ENCODE measurements at regions of chr6 and their contacts with region 1.

Region 1: GRCh38 chr6:157034436-157035230 is 257.5 kb downstream of the ARID1B start:
- DNase-seq: no peak
- H3K4me3 ChIP-seq: peak overlapping the region in 1 of 8 donors; percentile 36
- H3K27ac ChIP-seq: peak overlapping the region in 3 of 8 donors; percentile 76 to 79 (median 77)
- H3K4me1 ChIP-seq: peaks cover 9 to 62% (median 33%) of the 10 kb centered on the region in 6 donors
- H3K27me3 ChIP-seq: no peaks in the 10 kb centered on the region
- CTCF ChIP-seq: peak in 10 of 11 experiments; percentile 16 to 69 (median 60)
- POLR2A ChIP-seq: no peak

Region 2: DNA sequence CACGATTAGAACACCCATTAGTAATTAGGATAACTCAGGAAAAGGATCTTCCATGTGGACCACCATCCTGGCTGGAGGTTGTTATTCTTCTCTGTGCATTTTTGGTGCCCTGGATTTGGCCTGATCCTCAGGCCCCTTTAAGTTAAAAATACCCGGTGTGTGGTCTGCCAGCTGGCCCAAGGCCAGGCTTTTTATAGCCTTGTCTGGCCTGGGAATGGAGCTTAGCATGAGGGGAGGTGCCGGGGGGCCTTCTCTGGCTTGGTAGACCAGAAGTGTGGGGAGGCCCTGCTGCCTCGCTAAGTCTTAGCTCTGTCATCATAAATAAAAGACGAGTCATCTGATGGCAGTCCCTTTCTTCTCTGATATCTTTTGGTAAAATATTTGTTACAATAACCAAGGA is 186.1 kb before region 1 on chr6:
- intact Hi-C with region 1: no loop called
- DNase-seq: no peak
- H3K4me3 ChIP-seq: no peak overlapping the region
- H3K27ac ChIP-seq: peak overlapping the region in 2 of 8 donors; percentile 17 to 38
- H3K4me1 ChIP-seq: peaks cover 50 to 100% (median 93%) of the 10 kb centered on the region in 6 donors
- H3K27me3 ChIP-seq: no peaks in the 10 kb centered on the region
- CTCF ChIP-seq: no peak
- POLR2A ChIP-seq: no peak

Region 3: GRCh38 chr6:157184202-157185020 is 149.8 kb after region 1 on chr6:
- intact Hi-C with region 1: loop called (anchors 10 kb)
- DNase-seq: peak; percentile 86
- H3K4me3 ChIP-seq: no peak overlapping the region
- H3K27ac ChIP-seq: no peak overlapping the region
- H3K4me1 ChIP-seq: peaks cover 0 to 19% (median 3%) of the 10 kb centered on the region in 6 donors
- H3K27me3 ChIP-seq: no peaks in the 10 kb centered on the region
- CTCF ChIP-seq: peak; percentile 50 to 85 (median 70)
- POLR2A ChIP-seq: no peak

Region 4: DNA sequence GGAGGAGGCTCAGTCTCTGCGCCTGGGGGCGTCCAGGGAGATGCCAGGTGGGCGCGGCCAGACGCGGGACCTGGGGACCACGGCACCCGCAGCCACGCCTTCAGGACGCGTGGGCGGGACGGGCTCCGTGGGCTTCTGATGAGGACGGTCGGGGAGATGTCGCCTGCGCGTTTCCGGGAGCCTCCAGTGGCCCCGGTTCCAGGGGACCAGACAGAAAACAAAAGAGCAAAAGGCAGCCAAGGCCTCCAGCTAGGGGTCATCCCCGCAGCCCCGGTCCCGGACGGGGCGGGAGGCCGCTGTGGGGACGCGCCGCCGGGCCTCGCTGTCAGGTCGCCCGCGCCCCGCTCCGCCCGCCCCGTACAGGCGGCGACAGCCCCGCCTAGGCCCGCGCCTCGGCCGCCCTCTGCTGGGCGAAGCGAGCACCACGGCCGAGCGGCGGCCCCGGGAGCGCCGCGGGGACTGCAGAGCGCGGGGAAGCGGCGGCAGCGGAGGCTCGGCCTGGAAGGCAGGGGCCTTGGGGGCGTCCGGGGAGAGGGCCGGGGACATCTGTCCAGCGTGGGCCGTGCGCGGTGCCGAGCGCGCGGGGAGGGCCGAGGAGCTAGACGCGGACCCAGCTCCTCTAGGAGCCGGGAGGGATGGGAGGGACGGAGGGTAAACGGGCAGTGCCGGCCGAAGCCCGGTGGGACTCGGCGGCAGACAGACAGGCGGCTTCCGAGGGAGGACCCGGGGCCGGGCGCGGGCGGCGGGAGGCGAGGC is 240.0 kb after region 1 on chr6:
- intact Hi-C with region 1: loop called (anchors 10 kb)
- DNase-seq: peak; percentile 97
- H3K4me3 ChIP-seq: peak overlapping the region; percentile 52 to 87 (median 63)
- H3K27ac ChIP-seq: peak overlapping the region; percentile 75 to 93 (median 88)
- H3K4me1 ChIP-seq: peaks cover 0 to 30% (median 19%) of the 10 kb centered on the region in 6 donors
- H3K27me3 ChIP-seq: no peaks in the 10 kb centered on the region
- CTCF ChIP-seq: peak; percentile 10 to 97 (median 87)
- POLR2A ChIP-seq: peak in 1 of 3 donors; percentile 6

Region 5: GRCh38 chr6:157823001-157823527 is 788.4 kb after region 1 on chr6 and contains the start of gene SNX9:
- intact Hi-C with region 1: no loop called
- DNase-seq: peak; percentile 93
- H3K4me3 ChIP-seq: peak within 1 kb of the TSS; percentile 68 to 88 (median 72)
- H3K27ac ChIP-seq: peak within 1 kb of the TSS; percentile 81 to 96 (median 92)
- H3K4me1 ChIP-seq: peaks cover 13 to 41% (median 25%) of the 10 kb centered on the region in 6 donors
- H3K27me3 ChIP-seq: peaks cover 0 to 12% (median 0%) of the 10 kb centered on the region in 7 donors
- CTCF ChIP-seq: peak in 2 of 11 experiments; percentile 12 to 15
- POLR2A ChIP-seq: peak in 1 of 3 donors; percentile 43
- total RNA-seq, gene SNX9: 29.0 to 42.5 (median 36.1) TPM